ENCODE measurements at regions of chr10 and their contacts with region 1.

Region 1: GRCh38 chr10:97572214-97572989 is at the start of gene ANKRD2:
- DNase-seq: peak; percentile 79
- ATAC-seq: peak; percentile 81
- H3K4me3 ChIP-seq: no peak within 1 kb of the TSS
- H3K27ac ChIP-seq: no peak within 1 kb of the TSS
- H3K4me1 ChIP-seq: peaks cover 16% of the 10 kb centered on the region
- H3K27me3 ChIP-seq: no peaks in the 10 kb centered on the region
- CTCF ChIP-seq: peak; percentile 91
- POLR2A ChIP-seq: no peak
- RAD21 ChIP-seq: peak; percentile 93
- total RNA-seq, gene ANKRD2: 0.28 and 0.36 TPM in 2 replicates

Region 2: GRCh38 chr10:97612386-97612785 is 40.0 kb after region 1 on chr10:
- CTCF ChIA-PET with region 1: interaction called, 4 read pairs
- POLR2A ChIA-PET with region 1: no interaction called
- dilution Hi-C with region 1: no loop called
- in situ Hi-C with region 1: no loop called
- intact Hi-C with region 1: loop called (anchors 1 kb)
- DNase-seq: peak; percentile 55
- ATAC-seq: peak; percentile 80
- H3K4me3 ChIP-seq: no peak overlapping the region
- H3K27ac ChIP-seq: no peak overlapping the region
- H3K4me1 ChIP-seq: no peaks in the 10 kb centered on the region
- H3K27me3 ChIP-seq: no peaks in the 10 kb centered on the region
- CTCF ChIP-seq: peak; percentile 58
- POLR2A ChIP-seq: no peak
- RAD21 ChIP-seq: peak; percentile 75

Region 3: DNA sequence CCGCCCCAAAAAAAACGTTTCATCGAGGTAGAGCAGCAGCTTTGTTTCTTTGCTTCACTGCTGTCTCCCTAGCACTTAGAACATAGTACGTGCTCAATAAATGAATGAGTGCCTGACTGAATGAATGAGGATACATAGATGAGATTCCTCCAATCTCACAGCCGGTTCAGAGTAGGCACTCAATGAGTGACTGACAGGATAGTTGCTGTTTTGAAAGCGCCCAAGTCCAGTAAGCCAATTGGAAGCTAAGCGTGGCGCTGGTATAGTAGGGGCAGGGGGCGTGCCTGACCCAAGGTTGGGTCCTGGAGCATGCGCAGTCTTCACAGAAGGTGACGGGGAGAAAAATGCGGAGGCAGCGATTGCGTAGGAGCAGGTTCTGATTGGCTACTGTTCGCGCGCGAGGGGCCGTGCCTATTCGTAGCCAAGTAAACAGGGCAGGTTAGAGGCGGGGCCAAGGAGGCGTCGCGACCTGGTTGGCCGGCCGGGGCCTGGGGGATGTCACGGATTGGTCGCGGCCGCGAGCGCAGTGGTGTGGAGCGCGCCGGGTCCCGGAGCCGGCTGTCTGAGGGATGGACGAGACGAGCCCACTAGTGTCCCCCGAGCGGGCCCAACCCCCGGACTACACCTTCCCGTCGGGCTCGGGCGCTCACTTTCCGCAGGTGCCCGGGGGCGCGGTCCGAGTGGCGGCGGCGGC is 67.9 kb after region 1 on chr10 and contains the start of gene PI4K2A:
- CTCF ChIA-PET with region 1: interaction called, 3 read pairs
- POLR2A ChIA-PET with region 1: no interaction called
- dilution Hi-C with region 1: no loop called
- in situ Hi-C with region 1: no loop called
- intact Hi-C with region 1: loop called (anchors 1 kb)
- DNase-seq: peak; percentile 99
- ATAC-seq: peak; percentile 98
- H3K4me3 ChIP-seq: peak within 1 kb of the TSS; percentile 77
- H3K27ac ChIP-seq: peak within 1 kb of the TSS; percentile 88
- H3K4me1 ChIP-seq: no peaks in the 10 kb centered on the region
- H3K27me3 ChIP-seq: no peaks in the 10 kb centered on the region
- CTCF ChIP-seq: no peak
- POLR2A ChIP-seq: peak; percentile 87
- RAD21 ChIP-seq: no peak
- total RNA-seq, gene PI4K2A: 15.6 and 15.8 TPM in 2 replicates

Region 4: GRCh38 chr10:97686962-97687784 is 114.8 kb after region 1 on chr10 and contains the start of gene AVPI1:
- CTCF ChIA-PET with region 1: no interaction called
- POLR2A ChIA-PET with region 1: no interaction called
- dilution Hi-C with region 1: no loop called
- in situ Hi-C with region 1: no loop called
- intact Hi-C with region 1: loop called (anchors 1 kb)
- DNase-seq: peak; percentile 96
- ATAC-seq: peak; percentile 81
- H3K4me3 ChIP-seq: peak within 1 kb of the TSS; percentile 98
- H3K27ac ChIP-seq: peak within 1 kb of the TSS; percentile 99
- H3K4me1 ChIP-seq: peaks cover 25% of the 10 kb centered on the region
- H3K27me3 ChIP-seq: no peaks in the 10 kb centered on the region
- CTCF ChIP-seq: no peak
- POLR2A ChIP-seq: peak; percentile 97
- RAD21 ChIP-seq: no peak
- total RNA-seq, gene AVPI1: 26.7 and 30.8 TPM in 2 replicates

Region 5: DNA sequence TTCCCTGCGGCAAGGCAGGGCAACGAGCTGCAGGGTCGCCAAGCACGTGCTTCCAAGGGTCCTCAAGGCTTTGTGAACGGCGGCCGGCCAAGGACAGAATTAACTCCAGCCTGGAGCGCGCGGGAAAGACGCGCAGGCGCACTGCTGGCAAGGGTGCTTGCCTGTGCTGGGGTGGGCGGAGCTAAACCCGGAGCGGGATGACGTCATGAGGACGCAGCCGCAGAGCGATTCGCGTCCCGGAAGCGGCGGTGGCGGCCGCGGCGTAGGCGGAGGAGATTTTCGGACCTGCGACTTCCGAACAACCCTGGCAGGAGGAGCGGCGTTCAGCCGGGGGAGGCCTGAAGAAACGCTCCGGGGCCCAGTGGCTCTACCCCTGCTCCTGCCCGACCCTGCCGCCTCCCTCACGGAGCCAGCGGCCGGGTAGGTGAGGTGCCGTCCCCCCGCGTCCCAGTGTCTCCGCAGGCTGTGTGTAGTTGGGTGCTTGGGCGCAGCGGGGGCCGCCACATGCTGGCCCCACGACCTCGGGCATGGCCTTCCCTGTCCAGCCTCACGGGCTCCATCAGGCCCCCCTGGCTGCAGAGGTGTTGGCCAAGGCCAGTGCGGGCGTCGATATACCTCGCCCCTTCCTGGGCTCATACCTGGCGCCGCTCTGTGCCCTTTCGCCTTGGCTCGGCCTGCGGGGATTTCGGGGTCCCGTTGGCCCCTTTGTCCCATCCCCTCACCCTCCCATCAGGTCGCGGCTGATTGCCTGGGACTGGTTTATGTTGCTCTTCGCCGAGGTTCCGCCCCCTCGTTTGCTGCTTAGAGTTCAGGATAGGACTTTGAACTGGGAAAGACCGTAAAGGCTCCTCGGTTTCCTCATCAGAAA is 164.7 kb after region 1 on chr10 and contains the start of gene ZFYVE27:
- CTCF ChIA-PET with region 1: no interaction called
- POLR2A ChIA-PET with region 1: no interaction called
- dilution Hi-C with region 1: no loop called
- in situ Hi-C with region 1: loop called (anchors 10 kb)
- intact Hi-C with region 1: loop called (anchors 5 kb)
- DNase-seq: peak; percentile 94
- ATAC-seq: peak; percentile 94
- H3K4me3 ChIP-seq: peak within 1 kb of the TSS; percentile 90
- H3K27ac ChIP-seq: peak within 1 kb of the TSS; percentile 85
- H3K4me1 ChIP-seq: peaks cover 9% of the 10 kb centered on the region
- H3K27me3 ChIP-seq: no peaks in the 10 kb centered on the region
- CTCF ChIP-seq: no peak
- POLR2A ChIP-seq: peak; percentile 91
- RAD21 ChIP-seq: no peak
- total RNA-seq, gene ZFYVE27: 12.8 and 13.1 TPM in 2 replicates

Measured in IMR-90 (cell line).